ENCODE measurements at regions of chr15 and their contacts with region 1.

Region 1: GRCh38 chr15:33126559-33127290 is 67.8 kb downstream of the FMN1 start:
- DNase-seq: no peak
- H3K4me3 Mint-ChIP-seq: no peak overlapping the region
- H3K27ac Mint-ChIP-seq: no peak overlapping the region
- H3K4me1 Mint-ChIP-seq: peaks cover 21% of the 10 kb centered on the region
- H3K27me3 Mint-ChIP-seq: peaks cover 7% of the 10 kb centered on the region

Region 2: GRCh38 chr15:33021806-33022389 is 104.8 kb before region 1 on chr15:
- intact Hi-C with region 1: loop called (anchors 2 kb)
- DNase-seq: no peak
- H3K4me3 Mint-ChIP-seq: no peak overlapping the region
- H3K27ac Mint-ChIP-seq: no peak overlapping the region
- H3K4me1 Mint-ChIP-seq: peaks cover under 1% of the 10 kb centered on the region
- H3K27me3 Mint-ChIP-seq: no peaks in the 10 kb centered on the region

Region 3: DNA sequence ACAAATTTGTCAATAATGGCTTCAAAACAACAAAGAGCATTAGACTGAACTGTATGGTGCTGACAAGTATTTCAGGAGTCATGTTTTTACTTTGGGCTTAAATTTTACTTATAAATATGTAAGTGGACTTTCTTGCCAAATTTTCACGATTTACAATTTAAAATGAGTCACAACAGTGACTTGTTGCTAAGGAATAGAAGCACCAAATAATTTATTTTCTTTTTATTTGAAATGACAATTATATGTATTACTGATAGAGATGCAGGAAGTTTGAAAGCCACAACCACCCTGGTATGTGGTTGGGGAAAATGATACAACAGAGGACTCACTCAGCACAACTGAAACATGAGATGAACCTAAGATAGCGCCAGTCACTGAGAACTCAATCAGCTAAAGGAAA is 22.5 kb before region 1 on chr15:
- intact Hi-C with region 1: no loop called
- DNase-seq: peak; percentile 27
- H3K4me3 Mint-ChIP-seq: no peak overlapping the region
- H3K27ac Mint-ChIP-seq: no peak overlapping the region
- H3K4me1 Mint-ChIP-seq: peaks cover 8% of the 10 kb centered on the region
- H3K27me3 Mint-ChIP-seq: peaks cover 48% of the 10 kb centered on the region

Region 4: DNA sequence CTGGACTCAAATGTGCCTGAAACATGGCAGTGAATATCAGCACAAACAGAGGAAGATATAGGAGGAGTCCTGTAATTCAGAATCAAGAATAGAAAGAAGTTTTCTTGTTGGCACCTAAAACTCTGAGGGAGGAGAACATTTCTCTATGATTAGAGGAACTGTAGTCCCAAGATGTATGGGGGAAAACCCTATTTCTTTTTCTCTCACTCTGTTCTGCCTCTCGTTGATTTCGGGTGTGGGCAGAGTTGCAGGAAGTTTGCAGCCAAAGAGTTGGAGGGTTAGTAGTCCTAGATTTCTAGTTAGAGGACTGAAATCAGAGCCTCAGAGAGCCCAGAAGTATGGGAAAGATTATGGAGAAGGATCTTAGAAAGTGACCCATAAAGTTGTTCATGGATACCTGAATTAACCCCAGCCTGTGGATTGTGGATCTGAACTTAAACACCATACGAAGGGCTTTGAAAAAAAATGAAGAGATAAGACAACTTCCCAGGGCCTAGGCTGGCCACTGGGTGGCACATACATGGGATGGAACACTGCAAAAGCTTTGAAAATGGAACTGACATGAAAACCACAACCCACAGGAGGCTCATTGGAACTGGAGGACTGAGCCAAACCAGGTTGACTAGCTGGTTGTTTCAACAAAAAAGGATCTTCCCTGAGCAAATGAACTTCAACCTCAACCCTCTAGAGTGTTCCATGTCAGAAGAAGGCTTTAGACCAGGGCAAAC is 33.2 kb after region 1 on chr15:
- intact Hi-C with region 1: no loop called
- DNase-seq: no peak
- H3K4me3 Mint-ChIP-seq: no peak overlapping the region
- H3K27ac Mint-ChIP-seq: no peak overlapping the region
- H3K4me1 Mint-ChIP-seq: peaks cover 3% of the 10 kb centered on the region
- H3K27me3 Mint-ChIP-seq: peaks cover 48% of the 10 kb centered on the region

Measured in activated T-helper 2 cell treated with anti-CD3 and anti-CD28 coated beads, Interferon-gamma antibody, Interleukin-2, Interleukin-4, amounts not matched to agents 10 μg/mL and 5 μg/mL and 100 μg/mL, durations not matched to agents 14 hours and 24 hours and 36 hours (primary cell).